Cardiac septum (tissue), 1 donor: ENCODE measurements at regions of chr13 and their contacts with region 1.

Region 1: DNA sequence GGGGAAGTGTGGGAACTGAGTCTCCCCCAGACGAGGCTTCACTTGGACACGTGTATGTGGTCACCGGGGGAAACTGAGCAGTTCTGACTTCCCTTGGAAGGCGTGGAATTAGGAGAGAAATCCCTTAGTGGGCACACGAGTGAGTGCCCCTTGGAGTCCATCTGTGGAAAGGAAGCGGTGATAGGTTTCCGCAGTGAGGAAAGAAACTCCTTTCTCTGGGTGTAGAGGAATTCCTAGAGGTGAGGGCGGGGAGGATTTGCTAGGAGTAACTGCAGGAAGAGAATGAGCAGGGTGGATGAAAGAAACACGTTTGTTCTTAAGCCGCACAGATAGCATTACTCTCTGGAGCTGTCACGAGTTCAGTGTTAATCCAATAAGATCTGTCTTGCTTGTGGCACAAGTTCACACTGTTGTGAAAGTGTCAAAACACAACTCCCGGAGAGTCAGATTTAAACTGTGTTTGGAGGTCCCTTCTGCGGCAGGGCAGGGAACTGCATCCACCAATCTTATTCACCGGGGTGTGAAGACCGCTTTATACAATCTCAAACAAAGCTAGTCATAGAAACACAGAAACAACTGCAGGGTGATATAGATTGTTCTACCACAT is 1.2 kb downstream of the KL start:
- DNase-seq: no peak

Region 2: GRCh38 chr13:32586080-32586900 is 431.1 kb before region 1 on chr13 and contains the start of gene PDS5B:
- intact Hi-C with region 1: loop called (anchors 2 kb)
- DNase-seq: peak; percentile 98
- total RNA-seq, gene PDS5B: 22.7 TPM

Region 3: GRCh38 chr13:32737111-32737571 is 280.3 kb before region 1 on chr13:
- intact Hi-C with region 1: loop called (anchors 10 kb)
- DNase-seq: no peak

Region 4: GRCh38 chr13:32969516-32969941 is 47.9 kb before region 1 on chr13:
- intact Hi-C with region 1: loop called (anchors 5 kb)
- DNase-seq: no peak